Sigmoid colon (tissue), 7 donors: ENCODE measurements at regions of chr15 and their contacts with region 1.

Region 1: GRCh38 chr15:85769182-85769900 is 25.4 kb downstream of the KLHL25 start:
- DNase-seq: no peak
- H3K4me3 ChIP-seq: no peak overlapping the region
- H3K27ac ChIP-seq: no peak overlapping the region
- H3K4me1 ChIP-seq: peaks cover 0 to 9% (median 7%) of the 10 kb centered on the region in 4 donors
- H3K27me3 ChIP-seq: no peaks in the 10 kb centered on the region
- CTCF ChIP-seq: no peak
- EP300 ChIP-seq: no peak
- POLR2A ChIP-seq: no peak

Region 2: DNA sequence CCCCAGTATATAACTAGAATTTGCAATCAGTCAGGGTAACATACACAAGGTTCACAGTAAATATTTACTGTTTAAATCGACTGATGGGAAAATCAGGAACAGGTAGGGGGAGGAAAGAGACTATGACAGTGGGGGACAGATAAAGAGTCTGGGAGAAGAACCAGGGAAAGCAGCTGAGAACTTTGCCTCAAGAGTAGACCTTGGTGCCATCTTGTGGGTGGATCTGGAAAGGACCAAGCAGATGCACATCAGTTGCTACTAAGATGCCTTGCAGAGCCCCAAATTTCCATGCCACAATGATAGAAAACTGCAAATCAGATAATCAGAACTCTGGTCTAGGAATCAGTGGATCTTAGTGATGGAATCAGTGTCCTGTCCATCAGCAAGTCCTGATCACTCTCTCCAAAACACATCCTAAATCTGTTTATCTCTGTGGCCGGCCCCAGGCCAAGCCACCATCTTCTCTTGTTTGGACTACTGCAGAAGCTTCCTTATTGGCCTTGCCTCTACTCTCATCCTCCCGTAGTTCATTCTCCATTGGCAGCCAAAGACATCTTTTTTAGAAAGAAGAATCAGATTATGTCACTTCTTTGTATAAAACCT is 725.0 kb before region 1 on chr15:
- intact Hi-C with region 1: no loop called
- DNase-seq: peak; percentile 77
- H3K4me3 ChIP-seq: no peak overlapping the region
- H3K27ac ChIP-seq: peak overlapping the region in 1 of 4 donors; percentile 1
- H3K4me1 ChIP-seq: peaks cover 0 to 17% (median 6%) of the 10 kb centered on the region in 4 donors
- H3K27me3 ChIP-seq: no peaks in the 10 kb centered on the region
- CTCF ChIP-seq: peak; percentile 51 to 67 (median 60)
- EP300 ChIP-seq: no peak
- POLR2A ChIP-seq: no peak

Region 3: DNA sequence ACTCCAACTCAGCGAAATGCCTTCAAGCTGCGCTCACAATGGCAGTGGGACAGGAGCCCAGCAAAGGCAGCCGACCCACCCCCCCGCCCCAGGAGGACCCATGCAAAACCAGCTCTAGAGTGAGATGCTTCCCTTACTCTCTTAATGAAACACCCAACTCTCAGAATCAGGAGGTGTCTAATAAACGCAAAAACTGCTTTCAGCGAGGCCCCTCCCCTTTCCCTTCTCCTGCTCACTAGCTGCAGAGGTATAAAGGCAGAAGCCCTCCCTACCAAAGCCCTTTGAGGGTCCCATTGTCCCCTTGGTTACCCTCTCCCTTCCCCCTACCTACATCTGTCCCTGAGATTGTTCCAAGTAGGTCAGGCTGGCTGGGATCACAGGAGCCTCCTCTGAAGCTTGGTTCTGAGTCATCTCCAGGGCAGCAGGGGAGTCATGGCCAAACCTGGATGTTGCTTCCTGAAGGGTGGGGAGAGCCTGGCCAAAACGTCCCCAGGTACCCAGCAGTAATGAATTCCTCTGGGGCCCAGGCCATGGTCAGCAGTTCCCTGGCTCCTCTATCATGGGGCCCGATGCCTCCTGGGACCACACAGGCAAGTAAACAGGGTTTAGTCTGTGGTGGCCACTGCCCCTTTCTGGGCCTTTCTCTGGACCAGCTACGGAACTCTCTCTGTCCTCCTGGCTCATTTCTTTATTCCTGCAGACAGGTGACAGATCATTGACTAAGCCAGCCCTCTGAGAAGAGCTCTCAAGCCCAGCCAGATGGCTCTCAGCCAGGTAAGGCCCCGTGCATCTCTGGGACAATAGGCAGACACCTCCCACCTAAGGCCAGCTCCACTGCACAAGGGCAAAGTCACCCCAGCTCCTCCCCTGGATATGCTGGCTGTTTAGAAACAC is 16.8 kb after region 1 on chr15:
- intact Hi-C with region 1: loop called (anchors 2 kb)
- DNase-seq: no peak
- H3K4me3 ChIP-seq: no peak overlapping the region
- H3K27ac ChIP-seq: peak overlapping the region in 3 of 4 donors; percentile 7 to 67 (median 65)
- H3K4me1 ChIP-seq: peaks cover 0 to 20% (median 19%) of the 10 kb centered on the region in 4 donors
- H3K27me3 ChIP-seq: no peaks in the 10 kb centered on the region
- CTCF ChIP-seq: no peak
- EP300 ChIP-seq: no peak
- POLR2A ChIP-seq: no peak